PC-3 (cell line): ENCODE measurements at regions of chrX and their contacts with region 1.

Region 1: DNA sequence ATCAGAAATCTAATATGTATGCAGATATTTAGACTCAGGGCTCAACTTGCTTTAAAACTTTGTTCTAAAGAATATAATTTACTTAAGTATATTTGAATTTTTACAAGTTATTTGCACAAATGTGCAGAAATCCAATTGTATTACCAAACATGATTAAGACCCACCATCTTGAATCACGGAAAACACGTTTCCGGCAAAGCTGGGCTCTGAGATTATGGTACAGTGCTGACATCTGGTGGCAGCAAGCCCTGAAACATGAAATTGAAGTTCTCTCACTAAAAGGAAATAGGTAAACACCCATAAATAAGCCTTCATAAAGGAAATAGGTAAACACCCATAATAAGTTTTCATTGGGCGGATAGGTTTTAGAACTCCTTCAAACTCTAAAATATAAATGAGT is 98.3 kb upstream of the MAOA start:
- DNase-seq: peak; percentile 75
- ATAC-seq: no peak
- H3K4me3 ChIP-seq: no peak overlapping the region
- H3K27ac ChIP-seq: no peak overlapping the region
- H3K4me1 ChIP-seq: peaks cover 2% of the 10 kb centered on the region; the same call in 1 of the 2 replicates
- H3K27me3 ChIP-seq: no peaks in the 10 kb centered on the region
- CTCF ChIP-seq: peak; percentile 81

Region 2: GRCh38 chrX:41781502-41781901 is 1776.3 kb before region 1 on chrX:
- CTCF ChIA-PET with region 1: no interaction called
- POLR2A ChIA-PET with region 1: no interaction called
- intact Hi-C with region 1: loop called (anchors 2 kb)
- DNase-seq: peak; percentile 69
- ATAC-seq: no peak
- H3K4me3 ChIP-seq: no peak overlapping the region
- H3K27ac ChIP-seq: no peak overlapping the region
- H3K4me1 ChIP-seq: peaks cover 28% of the 10 kb centered on the region
- H3K27me3 ChIP-seq: no peaks in the 10 kb centered on the region
- CTCF ChIP-seq: peak; percentile 87

Region 3: DNA sequence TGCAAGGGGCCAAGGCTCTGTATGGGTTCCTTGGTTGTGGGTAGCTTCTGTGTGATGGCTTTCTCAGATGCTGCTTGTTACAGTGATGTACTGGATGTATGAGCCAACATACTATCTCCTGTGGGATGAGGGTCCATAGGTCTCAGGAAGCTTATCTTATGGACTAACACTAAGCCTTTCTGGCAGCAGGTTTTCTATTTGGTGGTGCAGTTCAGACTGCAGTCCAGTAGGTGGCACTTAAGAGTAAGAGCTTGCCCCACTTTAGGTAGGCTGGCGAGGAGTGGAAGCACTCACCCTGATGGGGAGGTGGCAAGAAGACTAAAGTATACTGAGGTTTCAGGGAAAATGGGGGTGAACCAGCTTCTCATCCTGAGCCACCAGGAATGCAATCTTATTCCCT is 208.4 kb before region 1 on chrX:
- CTCF ChIA-PET with region 1: interaction called, 3 read pairs
- POLR2A ChIA-PET with region 1: no interaction called
- intact Hi-C with region 1: loop called (anchors 2 kb)
- DNase-seq: peak; percentile 55
- ATAC-seq: no peak
- H3K4me3 ChIP-seq: no peak overlapping the region
- H3K27ac ChIP-seq: no peak overlapping the region
- H3K4me1 ChIP-seq: no peaks in the 10 kb centered on the region
- H3K27me3 ChIP-seq: no peaks in the 10 kb centered on the region
- CTCF ChIP-seq: peak; percentile 70

Region 4: GRCh38 chrX:43615660-43616059 is 57.9 kb after region 1 on chrX:
- CTCF ChIA-PET with region 1: no interaction called
- POLR2A ChIA-PET with region 1: no interaction called
- intact Hi-C with region 1: no loop called
- DNase-seq: no peak
- ATAC-seq: no peak
- H3K4me3 ChIP-seq: no peak overlapping the region
- H3K27ac ChIP-seq: no peak overlapping the region
- H3K4me1 ChIP-seq: no peaks in the 10 kb centered on the region
- H3K27me3 ChIP-seq: no peaks in the 10 kb centered on the region
- CTCF ChIP-seq: no peak

Region 5: DNA sequence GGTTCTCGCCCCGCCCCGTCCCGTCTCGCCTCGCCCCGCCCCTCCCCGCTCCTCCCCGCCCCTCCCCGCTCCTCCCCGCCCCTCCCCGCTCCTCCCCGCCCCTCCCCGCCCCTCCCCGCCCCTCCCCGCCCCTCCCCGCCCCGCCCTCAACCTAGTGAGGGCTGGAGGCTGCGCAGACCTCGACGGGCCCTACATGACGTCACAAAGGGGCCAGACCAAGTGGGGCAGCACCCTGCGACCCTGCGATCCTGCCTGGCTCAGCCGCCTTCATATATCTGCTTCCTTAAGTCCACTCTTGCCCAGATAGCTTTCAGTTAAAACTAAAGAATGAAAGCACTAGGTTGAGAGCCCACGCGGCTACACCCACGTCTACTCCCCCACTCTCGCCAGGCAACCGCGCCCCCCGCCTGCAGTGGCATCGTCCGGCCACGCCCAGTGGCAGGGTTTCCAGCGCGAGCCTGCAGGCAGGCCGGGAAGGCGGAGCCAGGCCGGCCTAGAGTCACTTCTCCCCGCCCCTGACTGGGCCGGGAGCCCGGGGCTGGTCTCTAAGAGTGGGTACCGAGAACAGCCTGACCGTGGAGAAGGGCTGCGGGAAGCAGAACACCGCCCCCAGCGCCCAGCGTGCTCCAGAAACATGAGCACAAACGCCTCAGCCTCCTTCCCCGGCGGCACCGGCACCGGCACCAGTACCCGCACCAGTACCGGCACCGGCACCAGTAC is 96.8 kb after region 1 on chrX:
- CTCF ChIA-PET with region 1: no interaction called
- POLR2A ChIA-PET with region 1: no interaction called
- intact Hi-C with region 1: loop called (anchors 10 kb)
- DNase-seq: peak; percentile 93
- ATAC-seq: peak; percentile 96
- H3K4me3 ChIP-seq: peak overlapping the region; percentile 73
- H3K27ac ChIP-seq: peak overlapping the region; percentile 87
- H3K4me1 ChIP-seq: no peaks in the 10 kb centered on the region; the same call in 1 of the 2 replicates
- H3K27me3 ChIP-seq: no peaks in the 10 kb centered on the region
- CTCF ChIP-seq: peak; percentile 28; the same call in 1 of the 2 replicates

Region 6: DNA sequence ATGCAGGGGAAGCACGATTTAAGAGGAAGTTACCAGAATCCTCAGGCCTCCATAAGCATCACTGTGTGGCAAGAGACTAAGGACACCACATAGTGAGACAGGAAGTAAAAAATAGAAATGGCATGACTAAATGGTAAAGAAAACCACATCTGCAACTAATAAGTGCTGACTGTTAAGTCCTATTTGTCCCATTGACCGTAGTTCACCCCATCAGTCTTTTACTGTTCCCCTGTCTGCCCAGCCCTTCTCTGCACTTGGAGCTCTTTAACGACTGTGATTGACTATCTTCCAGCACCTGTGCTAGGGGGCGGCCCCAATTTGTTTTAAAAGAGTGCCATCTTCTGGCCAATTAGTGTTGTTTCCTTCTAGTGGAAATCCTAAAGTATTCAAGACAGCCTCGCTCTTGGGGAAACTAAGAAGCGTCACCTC is 192.5 kb after region 1 on chrX:
- CTCF ChIA-PET with region 1: interaction called, 5 read pairs
- POLR2A ChIA-PET with region 1: no interaction called
- intact Hi-C with region 1: loop called (anchors 1 kb)
- DNase-seq: peak; percentile 71
- ATAC-seq: peak; percentile 74
- H3K4me3 ChIP-seq: no peak overlapping the region
- H3K27ac ChIP-seq: no peak overlapping the region
- H3K4me1 ChIP-seq: no peaks in the 10 kb centered on the region
- H3K27me3 ChIP-seq: no peaks in the 10 kb centered on the region
- CTCF ChIP-seq: peak; percentile 75

Region 7: DNA sequence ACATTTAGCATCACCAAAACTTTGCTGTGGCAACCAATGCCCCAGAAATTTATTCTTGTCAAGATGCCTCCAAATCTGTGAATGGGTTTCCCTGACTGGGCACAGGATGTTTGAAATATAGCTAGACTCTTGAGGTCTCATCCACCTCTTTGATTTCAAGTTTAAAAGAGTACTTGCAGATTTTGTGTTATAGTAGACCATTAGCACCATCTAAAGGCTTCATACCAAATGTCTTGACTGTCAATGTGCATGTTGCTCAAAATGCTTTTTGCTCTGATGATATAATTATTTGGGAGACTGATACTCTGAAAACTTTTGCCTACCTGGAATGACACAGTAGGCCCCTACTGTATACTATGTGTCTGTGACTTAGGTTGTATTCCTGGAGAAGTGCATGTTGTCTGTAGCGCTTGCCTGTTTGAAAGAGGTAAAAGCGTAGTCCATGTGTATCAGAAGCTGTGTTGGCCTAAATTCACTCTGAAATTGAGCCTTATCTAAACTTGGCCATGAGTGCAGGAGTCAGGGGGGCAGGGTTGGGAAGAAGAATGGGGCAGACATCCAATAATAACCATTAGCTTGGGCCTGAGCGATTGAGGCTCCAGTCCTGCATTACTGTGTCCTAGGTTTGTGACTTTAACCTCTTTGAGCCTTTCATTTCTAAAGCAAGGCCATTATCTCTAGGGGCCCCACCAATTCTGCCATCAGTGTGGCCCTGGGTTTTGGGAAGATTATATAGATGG is 381.6 kb after region 1 on chrX:
- CTCF ChIA-PET with region 1: interaction called, 3 read pairs
- POLR2A ChIA-PET with region 1: no interaction called
- intact Hi-C with region 1: loop called (anchors 5 kb)
- DNase-seq: peak; percentile 36
- ATAC-seq: peak; percentile 42; the same call in 1 of the 2 replicates
- H3K4me3 ChIP-seq: no peak overlapping the region
- H3K27ac ChIP-seq: no peak overlapping the region
- H3K4me1 ChIP-seq: peaks cover 13% of the 10 kb centered on the region
- H3K27me3 ChIP-seq: no peaks in the 10 kb centered on the region
- CTCF ChIP-seq: peak; percentile 46